Posterior cingulate gyrus (tissue), 11 donors: ENCODE measurements at regions of chrX and their contacts with region 1.

Region 1: GRCh38 chrX:14274691-14275090 is 245.0 kb upstream of the GEMIN8 start:
- DNase-seq: no peak

Region 2: GRCh38 chrX:14209034-14209433 is 65.7 kb before region 1 on chrX:
- intact Hi-C with region 1: loop called (anchors 10 kb)
- DNase-seq: no peak